PC-3 (cell line): ENCODE measurements at regions of chrX and their contacts with region 1.

Region 1: DNA sequence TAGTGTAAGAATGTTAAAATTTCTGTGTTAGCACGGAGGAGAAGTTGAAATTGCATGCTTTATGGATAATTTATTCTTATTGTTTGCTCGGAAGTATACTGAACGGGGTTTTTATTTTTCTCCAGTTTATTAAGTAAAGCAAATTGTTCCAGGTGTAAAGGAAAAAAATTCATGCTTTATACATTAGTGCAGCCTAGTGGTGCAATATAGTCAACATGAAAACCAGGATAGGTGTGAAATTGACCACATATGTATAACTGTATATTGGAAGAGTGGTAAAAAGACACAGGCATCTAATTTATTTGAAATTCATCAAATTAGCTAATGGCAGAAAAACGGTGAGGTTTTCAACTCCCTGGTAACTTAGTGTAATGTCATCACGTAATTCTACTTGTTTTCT is 959 bp downstream of the BRS3 start:
- DNase-seq: peak; percentile 42
- ATAC-seq: peak; percentile 49; the same call in 1 of the 2 replicates
- H3K4me3 ChIP-seq: 0 out of 2 replicates have a peak overlapping the region, but pooled peaks have one; percentile 18
- H3K27ac ChIP-seq: no peak overlapping the region
- H3K4me1 ChIP-seq: 0 out of 2 replicates have a peak, but pooled peaks cover 5% of the 10 kb centered on the region
- H3K27me3 ChIP-seq: no peaks in the 10 kb centered on the region; the same call in 1 of the 2 replicates
- CTCF ChIP-seq: peak; percentile 55

Region 2: GRCh38 chrX:136028251-136028984 is 460.3 kb before region 1 on chrX:
- CTCF ChIA-PET with region 1: no interaction called
- POLR2A ChIA-PET with region 1: no interaction called
- intact Hi-C with region 1: loop called (anchors 1 kb)
- DNase-seq: peak; percentile 80
- ATAC-seq: peak; percentile 77
- H3K4me3 ChIP-seq: no peak overlapping the region
- H3K27ac ChIP-seq: no peak overlapping the region
- H3K4me1 ChIP-seq: no peaks in the 10 kb centered on the region
- H3K27me3 ChIP-seq: no peaks in the 10 kb centered on the region
- CTCF ChIP-seq: peak; percentile 79

Region 3: GRCh38 chrX:136268051-136269048 is 220.4 kb before region 1 on chrX:
- CTCF ChIA-PET with region 1: no interaction called
- POLR2A ChIA-PET with region 1: no interaction called
- intact Hi-C with region 1: loop called (anchors 1 kb)
- DNase-seq: peak; percentile 67
- ATAC-seq: peak; percentile 71
- H3K4me3 ChIP-seq: no peak overlapping the region
- H3K27ac ChIP-seq: no peak overlapping the region
- H3K4me1 ChIP-seq: no peaks in the 10 kb centered on the region
- H3K27me3 ChIP-seq: no peaks in the 10 kb centered on the region
- CTCF ChIP-seq: peak; percentile 87

Region 4: DNA sequence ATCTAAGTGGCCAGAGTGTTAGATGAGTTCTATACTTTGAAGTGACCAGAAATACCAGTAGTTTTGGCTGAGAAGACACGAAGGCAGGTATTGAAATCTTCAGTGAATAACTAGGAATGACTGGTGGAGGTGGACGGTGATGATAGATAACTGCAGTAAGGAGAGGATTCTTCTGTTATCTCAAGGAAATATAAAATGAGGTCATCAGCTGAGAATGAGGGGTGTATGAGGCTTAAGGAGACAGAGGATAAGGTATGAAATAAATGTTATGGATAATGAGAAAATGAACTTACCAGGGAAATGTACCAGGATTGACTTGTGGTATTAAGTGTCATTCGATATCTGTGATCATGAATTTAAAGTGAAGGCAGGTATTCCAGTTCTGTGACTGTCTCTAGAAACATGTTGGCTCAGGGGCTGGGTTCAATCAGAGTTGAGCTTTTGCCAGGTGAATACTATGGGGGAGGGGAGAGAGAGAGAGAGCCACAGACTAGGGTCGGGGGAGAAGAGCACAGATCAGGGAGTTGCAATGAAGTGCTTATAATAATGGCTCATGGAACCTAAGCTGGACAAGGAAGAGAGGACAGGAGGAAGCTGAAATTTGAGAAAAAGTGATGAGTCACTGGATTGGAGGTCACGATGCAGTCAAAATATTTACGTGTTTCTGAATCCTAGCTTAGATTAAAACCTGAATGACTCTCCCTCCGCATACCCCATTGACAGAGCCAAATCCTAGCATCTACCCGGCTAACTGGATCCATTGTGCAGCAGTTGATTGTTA is 38.5 kb before region 1 on chrX:
- CTCF ChIA-PET with region 1: no interaction called
- POLR2A ChIA-PET with region 1: no interaction called
- intact Hi-C with region 1: loop called (anchors 5 kb)
- DNase-seq: peak; percentile 62
- ATAC-seq: peak; percentile 33
- H3K4me3 ChIP-seq: peak overlapping the region; percentile 43; the same call in 1 of the 2 replicates
- H3K27ac ChIP-seq: peak overlapping the region; percentile 55; the same call in 1 of the 2 replicates
- H3K4me1 ChIP-seq: peaks cover 45% of the 10 kb centered on the region
- H3K27me3 ChIP-seq: no peaks in the 10 kb centered on the region
- CTCF ChIP-seq: no peak

Region 5: DNA sequence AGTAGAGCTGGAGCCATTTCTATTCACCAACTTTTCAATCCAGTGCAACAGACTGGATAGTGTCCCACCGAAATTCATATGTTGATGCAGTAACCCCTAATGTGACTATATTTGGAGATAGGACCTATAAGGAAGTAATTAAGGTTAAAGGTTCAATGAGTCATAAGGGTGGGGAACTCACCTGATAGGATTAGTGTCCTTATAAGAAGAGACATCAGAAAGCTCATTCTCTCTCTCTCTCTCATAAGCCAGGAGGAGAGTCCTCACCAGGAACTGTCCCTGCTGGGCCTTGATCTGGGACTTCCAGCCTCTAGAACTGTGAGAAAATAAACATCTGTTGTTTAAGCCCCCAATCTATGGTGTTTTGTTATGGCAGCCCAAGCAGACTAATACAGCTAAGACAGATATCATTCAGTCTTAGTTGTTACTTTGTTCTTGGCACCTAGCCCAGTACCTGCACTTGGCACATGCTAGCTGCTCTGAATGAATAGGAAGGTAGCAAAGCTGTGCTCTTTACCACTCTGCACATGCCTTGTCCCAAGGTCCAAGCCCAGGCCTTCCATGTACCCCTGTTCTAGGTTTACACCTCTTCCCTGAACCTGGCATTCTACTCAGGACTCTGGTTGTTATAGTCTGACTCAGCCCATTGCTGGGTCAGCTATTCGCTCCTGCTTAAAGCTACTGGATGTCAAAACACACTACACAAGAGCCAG is 20.2 kb before region 1 on chrX:
- CTCF ChIA-PET with region 1: interaction called, 10 read pairs
- POLR2A ChIA-PET with region 1: no interaction called
- intact Hi-C with region 1: no loop called
- DNase-seq: peak; percentile 21
- ATAC-seq: no peak; the same call in 1 of the 2 replicates
- H3K4me3 ChIP-seq: no peak overlapping the region
- H3K27ac ChIP-seq: no peak overlapping the region
- H3K4me1 ChIP-seq: no peaks in the 10 kb centered on the region
- H3K27me3 ChIP-seq: no peaks in the 10 kb centered on the region
- CTCF ChIP-seq: no peak

Region 6: GRCh38 chrX:136588041-136588788 is 99.5 kb after region 1 on chrX:
- CTCF ChIA-PET with region 1: no interaction called
- POLR2A ChIA-PET with region 1: no interaction called
- intact Hi-C with region 1: no loop called
- DNase-seq: no peak
- ATAC-seq: no peak
- H3K4me3 ChIP-seq: no peak overlapping the region
- H3K27ac ChIP-seq: no peak overlapping the region
- H3K4me1 ChIP-seq: peaks cover 33% of the 10 kb centered on the region
- H3K27me3 ChIP-seq: no peaks in the 10 kb centered on the region
- CTCF ChIP-seq: no peak